Calu3 (cell line): ENCODE measurements at regions of chr5 and their contacts with region 1.

Region 1: GRCh38 chr5:168317521-168318147 is 26.2 kb downstream of the WWC1 start:
- DNase-seq: peak; percentile 77
- H3K4me3 Mint-ChIP-seq: peak overlapping the region; percentile 66
- H3K27ac Mint-ChIP-seq: peak overlapping the region; percentile 82
- H3K4me1 Mint-ChIP-seq: peaks cover 79% of the 10 kb centered on the region
- H3K27me3 Mint-ChIP-seq: no peaks in the 10 kb centered on the region
- CTCF ChIP-seq: no peak

Region 2: GRCh38 chr5:167555565-167556166 is 762.0 kb before region 1 on chr5:
- CTCF ChIA-PET with region 1: no interaction called
- intact Hi-C with region 1: no loop called
- DNase-seq: no peak
- H3K4me3 Mint-ChIP-seq: no peak overlapping the region
- H3K27ac Mint-ChIP-seq: no peak overlapping the region
- H3K4me1 Mint-ChIP-seq: no peaks in the 10 kb centered on the region
- H3K27me3 Mint-ChIP-seq: peaks cover 47% of the 10 kb centered on the region
- CTCF ChIP-seq: no peak

Region 3: DNA sequence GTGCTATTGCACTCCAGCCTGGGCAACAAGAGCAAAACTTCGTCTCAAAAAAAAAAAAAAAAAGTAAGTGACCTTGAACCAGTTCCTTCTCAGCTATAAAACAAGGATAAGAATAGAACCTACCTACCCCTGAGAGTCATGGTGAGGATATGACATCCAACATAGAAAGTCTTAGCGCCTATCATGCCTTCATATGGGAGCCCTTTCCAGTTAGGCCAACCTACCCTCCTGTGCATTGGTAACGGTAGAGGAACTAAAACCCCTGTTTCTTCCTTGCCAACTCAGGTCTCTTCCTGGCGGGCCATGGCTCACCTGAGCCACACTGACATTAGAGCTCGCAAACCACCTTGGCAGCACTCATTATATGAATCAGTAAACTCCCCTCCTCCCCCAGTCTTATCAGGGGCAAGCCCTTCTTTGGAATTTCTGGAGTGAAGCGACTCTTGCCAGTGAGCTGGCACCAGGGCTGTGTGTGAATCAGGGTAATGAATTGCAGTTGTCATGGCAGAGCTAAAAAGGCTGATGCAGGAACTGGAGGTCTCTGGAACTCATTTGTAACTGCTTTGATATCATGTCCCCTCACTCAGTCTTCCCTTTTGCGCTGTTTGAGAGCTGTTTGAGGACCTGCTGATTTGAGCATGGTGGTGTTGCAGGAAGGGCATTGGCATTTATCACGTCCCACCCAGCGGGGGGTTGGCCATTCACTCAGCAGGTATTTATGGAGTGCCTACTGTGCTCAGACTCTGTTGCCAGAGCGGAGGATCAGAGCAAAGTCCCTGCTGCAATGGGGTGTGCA is 15.8 kb before region 1 on chr5:
- CTCF ChIA-PET with region 1: interaction called, 41 read pairs
- intact Hi-C with region 1: loop called (anchors 1 kb)
- DNase-seq: peak; percentile 90
- H3K4me3 Mint-ChIP-seq: peak overlapping the region; percentile 71
- H3K27ac Mint-ChIP-seq: peak overlapping the region; percentile 97
- H3K4me1 Mint-ChIP-seq: peaks cover 90% of the 10 kb centered on the region
- H3K27me3 Mint-ChIP-seq: no peaks in the 10 kb centered on the region
- CTCF ChIP-seq: no peak

Region 4: DNA sequence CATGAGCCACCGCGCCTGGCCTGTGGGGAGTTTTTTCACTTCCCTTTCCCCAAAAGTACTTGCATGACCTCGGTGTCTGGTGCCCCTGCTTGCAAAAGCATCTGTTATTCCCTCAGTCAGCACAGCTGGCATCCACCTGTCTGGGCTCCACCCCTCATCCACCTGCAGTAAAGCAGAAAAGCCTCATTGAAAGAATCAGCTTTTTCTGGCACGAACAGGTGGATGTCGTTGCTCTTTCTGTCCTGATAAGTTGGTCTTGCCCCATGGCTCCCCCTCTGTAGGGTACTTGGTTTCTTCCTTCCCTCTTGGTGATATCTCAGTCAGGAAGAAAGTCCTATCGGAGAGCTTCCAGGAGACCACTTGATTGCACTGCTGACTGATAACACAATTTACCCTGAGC is 11.2 kb after region 1 on chr5:
- CTCF ChIA-PET with region 1: interaction called, 75 read pairs
- intact Hi-C with region 1: loop called (anchors 1 kb)
- DNase-seq: peak; percentile 78
- H3K4me3 Mint-ChIP-seq: peak overlapping the region; percentile 45
- H3K27ac Mint-ChIP-seq: peak overlapping the region; percentile 28
- H3K4me1 Mint-ChIP-seq: peaks cover 95% of the 10 kb centered on the region
- H3K27me3 Mint-ChIP-seq: no peaks in the 10 kb centered on the region
- CTCF ChIP-seq: no peak

Region 5: DNA sequence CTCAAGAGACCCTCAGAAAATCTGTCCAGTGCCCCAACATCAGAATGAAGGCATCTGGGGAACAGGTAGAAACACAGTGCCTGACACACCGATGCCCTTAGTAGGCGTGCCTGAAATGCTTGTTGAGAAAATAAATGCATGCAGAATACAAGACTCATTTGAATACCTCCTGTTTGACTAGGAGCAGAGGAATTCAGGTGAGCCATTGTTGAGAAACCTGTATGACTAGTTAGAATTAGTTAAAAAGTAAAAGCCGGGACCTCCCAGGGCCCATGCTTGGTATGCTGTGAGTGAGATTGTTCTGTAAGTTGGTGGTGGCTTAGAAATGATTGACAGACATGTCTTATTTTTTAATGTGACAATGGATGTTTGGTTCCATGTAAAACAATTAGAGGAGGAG is 28.8 kb after region 1 on chr5:
- CTCF ChIA-PET with region 1: interaction called, 9 read pairs
- intact Hi-C with region 1: loop called (anchors 1 kb)
- DNase-seq: peak; percentile 84
- H3K4me3 Mint-ChIP-seq: peak overlapping the region; percentile 53
- H3K27ac Mint-ChIP-seq: peak overlapping the region; percentile 85
- H3K4me1 Mint-ChIP-seq: peaks cover 91% of the 10 kb centered on the region
- H3K27me3 Mint-ChIP-seq: no peaks in the 10 kb centered on the region
- CTCF ChIP-seq: no peak

Region 6: DNA sequence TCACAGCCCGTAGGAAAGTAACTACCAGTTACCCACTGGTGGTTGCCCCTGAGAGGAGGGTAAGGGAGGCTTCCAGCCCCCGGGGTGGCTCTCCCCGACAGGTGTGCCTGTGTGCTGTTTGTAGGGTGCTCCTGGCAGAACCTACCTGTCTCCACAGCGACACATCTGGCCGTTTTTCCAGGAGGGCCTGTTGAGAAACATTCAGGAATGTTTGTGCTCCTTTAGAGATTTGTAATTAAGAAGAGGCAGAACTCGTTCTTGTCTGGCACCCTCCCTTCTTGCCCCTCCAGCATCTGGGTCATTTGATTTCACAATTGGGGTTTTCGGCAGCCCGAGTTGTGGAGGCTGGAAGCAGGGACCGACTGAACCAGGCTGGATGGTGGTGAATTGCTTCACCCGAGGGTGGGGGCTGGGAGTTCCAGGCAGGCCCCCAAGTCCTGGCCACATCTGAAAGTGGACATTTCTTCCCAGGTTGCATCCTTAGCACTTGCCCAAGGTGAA is 48.0 kb after region 1 on chr5:
- CTCF ChIA-PET with region 1: interaction called, 12 read pairs
- intact Hi-C with region 1: loop called (anchors 1 kb)
- DNase-seq: peak; percentile 82
- H3K4me3 Mint-ChIP-seq: peak overlapping the region; percentile 49
- H3K27ac Mint-ChIP-seq: peak overlapping the region; percentile 72
- H3K4me1 Mint-ChIP-seq: peaks cover 66% of the 10 kb centered on the region
- H3K27me3 Mint-ChIP-seq: no peaks in the 10 kb centered on the region
- CTCF ChIP-seq: peak; percentile 50

Region 7: DNA sequence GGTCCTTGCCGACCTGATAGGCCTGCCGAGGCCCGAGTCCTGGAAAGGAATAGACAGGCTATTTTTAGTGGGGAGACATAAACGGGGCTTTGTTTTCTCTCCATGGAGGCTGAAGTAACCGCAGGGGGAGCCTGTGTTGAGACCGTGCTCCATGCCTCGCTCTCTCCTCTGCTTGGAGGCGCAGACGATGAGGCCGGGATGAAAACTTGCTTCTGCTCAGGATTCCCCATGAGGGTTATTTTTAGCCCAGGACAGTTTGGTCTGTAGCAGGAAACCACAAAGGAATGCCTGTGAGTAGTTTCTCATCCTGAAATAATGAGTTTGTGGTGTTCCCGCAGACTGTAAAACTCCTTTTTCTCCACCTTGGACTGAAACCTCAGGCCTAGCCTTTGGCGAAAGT is 86.7 kb after region 1 on chr5:
- CTCF ChIA-PET with region 1: interaction called, 3 read pairs
- intact Hi-C with region 1: loop called (anchors 2 kb)
- DNase-seq: no peak
- H3K4me3 Mint-ChIP-seq: no peak overlapping the region
- H3K27ac Mint-ChIP-seq: no peak overlapping the region
- H3K4me1 Mint-ChIP-seq: peaks cover 45% of the 10 kb centered on the region
- H3K27me3 Mint-ChIP-seq: no peaks in the 10 kb centered on the region
- CTCF ChIP-seq: no peak